T-cell (primary cell): ENCODE measurements at regions of chr14 and their contacts with region 1.

Region 1: DNA sequence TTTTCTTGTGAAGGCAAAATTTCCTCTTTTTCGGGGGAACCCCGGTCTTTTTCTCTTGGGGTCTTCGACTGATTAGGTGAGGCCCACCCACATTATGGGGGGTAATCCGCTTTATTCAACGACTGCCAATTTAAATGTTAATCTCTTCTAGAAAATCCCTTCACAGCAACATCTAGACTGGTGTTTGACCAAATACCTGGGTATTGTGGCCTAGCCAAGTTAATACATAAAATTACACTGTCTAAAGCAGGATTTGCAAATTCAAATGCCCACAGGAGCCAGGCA is 170.0 kb upstream of the FOXN3 start:
- DNase-seq: no peak
- ATAC-seq: no peak
- H3K4me3 ChIP-seq: no peak overlapping the region
- H3K4me3 Mint-ChIP-seq: peak overlapping the region in 1 of 3 donors; percentile 18
- H3K27ac ChIP-seq: no peak overlapping the region
- H3K27ac Mint-ChIP-seq: no peak overlapping the region
- H3K4me1 ChIP-seq: peaks cover 16 to 24% of the 10 kb centered on the region in 2 experiments
- H3K4me1 Mint-ChIP-seq: peaks cover 76 to 85% (median 79%) of the 10 kb centered on the region in 3 donors
- H3K27me3 ChIP-seq: no peaks in the 10 kb centered on the region
- H3K27me3 Mint-ChIP-seq: no peaks in the 10 kb centered on the region

Region 2: GRCh38 chr14:89598548-89599186 is 11.6 kb after region 1 on chr14:
- CTCF ChIA-PET with region 1: interaction called in 1 of 2 experiments, 10 read pairs
- POLR2A ChIA-PET with region 1: no interaction called
- DNase-seq: peak in 1 of 35 experiments; percentile 24
- ATAC-seq: no peak
- H3K4me3 ChIP-seq: no peak overlapping the region
- H3K4me3 Mint-ChIP-seq: no peak overlapping the region
- H3K27ac ChIP-seq: no peak overlapping the region
- H3K27ac Mint-ChIP-seq: peak overlapping the region; percentile 39 to 45
- H3K4me1 ChIP-seq: no peaks in the 10 kb centered on the region
- H3K4me1 Mint-ChIP-seq: peaks cover 17 to 35% (median 30%) of the 10 kb centered on the region in 3 donors
- H3K27me3 ChIP-seq: no peaks in the 10 kb centered on the region
- H3K27me3 Mint-ChIP-seq: no peaks in the 10 kb centered on the region